Left cardiac atrium (tissue), 4 donors: ENCODE measurements at regions of chr11 and their contacts with region 1.

Region 1: GRCh38 chr11:9506489-9507276 is 45.9 kb downstream of the ZNF143 start:
- DNase-seq: peak; percentile 67
- ATAC-seq: peak; percentile 86 to 87

Region 2: DNA sequence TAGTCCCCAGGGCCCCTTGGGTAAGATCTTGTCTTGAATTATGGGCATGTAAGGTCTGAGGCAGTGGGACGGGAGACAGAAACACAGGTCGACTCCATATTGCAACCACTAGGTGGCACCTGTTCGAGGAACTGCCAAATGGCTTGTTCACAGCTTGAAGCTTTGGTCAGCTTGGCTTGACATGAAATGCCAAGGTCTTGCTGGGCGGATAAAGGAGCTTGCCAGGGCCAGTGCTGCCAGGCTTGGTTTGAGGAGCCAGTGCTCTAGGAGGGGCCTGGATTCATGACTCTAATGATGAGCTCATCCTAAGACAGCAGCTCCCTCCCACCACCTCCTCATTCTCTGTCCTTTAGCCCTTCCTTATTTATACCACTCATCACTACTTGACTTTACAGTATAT is 491.0 kb before region 1 on chr11:
- intact Hi-C with region 1: loop called in 1 of 2 experiments (anchors 5 kb)
- DNase-seq: peak; percentile 64
- ATAC-seq: peak; percentile 71

Region 3: DNA sequence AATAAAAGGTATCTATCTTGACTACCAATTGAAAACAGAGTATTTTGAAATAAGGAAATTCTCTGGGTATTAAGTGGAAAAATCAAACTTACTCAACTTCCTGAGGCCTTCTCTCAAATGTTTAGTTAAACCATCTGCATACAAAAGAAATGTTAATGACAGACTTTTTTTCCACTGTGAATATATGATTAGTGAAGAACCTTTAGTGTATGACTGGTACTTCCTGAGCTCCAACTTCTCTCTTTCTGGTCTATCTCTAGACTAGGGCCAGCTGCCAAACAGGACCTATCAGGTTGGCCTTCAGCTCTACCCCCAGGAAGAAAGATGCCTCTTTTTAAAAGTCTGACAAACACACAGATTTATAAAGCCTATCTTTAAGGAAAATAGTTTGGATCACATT is 346.5 kb before region 1 on chr11:
- intact Hi-C with region 1: loop called in 1 of 2 experiments (anchors 10 kb)
- DNase-seq: no peak
- ATAC-seq: peak in 1 of 2 donors; percentile 24

Region 4: DNA sequence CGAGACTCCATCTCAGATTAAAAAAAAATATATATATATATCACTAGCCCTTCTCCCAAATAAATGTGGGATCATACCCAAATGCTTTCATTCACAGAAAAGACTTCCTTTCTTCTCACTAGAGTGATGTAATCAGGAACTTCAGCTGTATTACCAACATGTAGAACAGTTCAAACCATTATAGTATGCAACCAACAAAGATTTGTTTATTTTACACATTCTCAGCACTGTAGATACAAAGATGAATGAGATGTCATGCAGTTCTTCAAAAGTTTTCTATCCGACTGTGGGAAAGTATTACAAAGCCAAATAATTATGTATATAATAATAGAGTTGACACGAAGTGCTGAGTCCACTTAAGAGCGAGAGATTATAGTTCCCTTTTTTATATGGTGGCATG is 68.1 kb before region 1 on chr11:
- intact Hi-C with region 1: loop called in 1 of 2 experiments (anchors 10 kb)
- DNase-seq: no peak
- ATAC-seq: no peak